ENCODE measurements at regions of chr19 and their contacts with region 1.

Region 1: GRCh38 chr19:13718733-13719132 is 45.6 kb upstream of the MRI1 start:
- DNase-seq: no peak
- H3K4me3 ChIP-seq: no peak overlapping the region
- H3K27ac ChIP-seq: no peak overlapping the region
- H3K4me1 ChIP-seq: no peaks in the 10 kb centered on the region
- H3K27me3 ChIP-seq: no peaks in the 10 kb centered on the region
- CTCF ChIP-seq: peak in 1 of 4 experiments; percentile 12
- POLR2A ChIP-seq: no peak

Region 2: DNA sequence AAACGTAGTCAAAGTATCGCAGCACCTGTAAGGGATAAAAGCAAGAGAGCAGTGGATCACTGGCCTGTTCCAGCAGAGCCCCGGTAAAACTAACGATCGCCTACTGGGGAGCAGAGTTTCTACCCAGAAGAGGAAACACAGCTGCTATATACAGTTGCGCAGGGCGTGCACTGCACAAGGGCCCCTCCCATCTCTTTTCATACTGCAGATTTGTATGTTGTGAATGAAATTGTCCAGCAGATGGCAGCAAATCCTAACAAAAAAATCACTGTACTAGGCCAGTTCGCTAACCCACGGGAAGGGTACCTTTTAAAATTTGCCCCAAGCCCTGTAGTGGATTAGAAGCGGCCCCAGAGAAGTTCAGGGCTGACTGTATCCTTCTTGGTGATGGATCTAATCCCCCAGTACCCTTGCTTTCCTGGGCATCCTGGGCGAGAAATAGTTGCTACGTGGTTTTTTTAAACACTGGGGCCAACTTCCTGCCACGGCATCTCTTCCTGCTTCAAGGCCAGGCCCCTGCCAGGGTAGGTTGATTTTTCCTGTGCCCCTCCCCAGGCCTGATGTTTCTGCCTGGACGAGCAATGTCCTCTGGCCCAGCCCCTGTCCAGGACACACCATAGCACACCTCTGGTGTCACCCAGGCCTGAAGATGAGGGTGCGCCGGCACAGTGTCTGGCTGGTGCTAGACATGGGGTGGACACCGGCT is 441.5 kb before region 1 on chr19:
- intact Hi-C with region 1: loop called (anchors 5 kb)
- DNase-seq: peak; percentile 49
- H3K4me3 ChIP-seq: no peak overlapping the region
- H3K27ac ChIP-seq: no peak overlapping the region
- H3K4me1 ChIP-seq: no peaks in the 10 kb centered on the region
- H3K27me3 ChIP-seq: no peaks in the 10 kb centered on the region
- CTCF ChIP-seq: peak; percentile 42 to 79 (median 74)
- POLR2A ChIP-seq: no peak

Region 3: GRCh38 chr19:13511947-13512346 is 206.8 kb before region 1 on chr19:
- intact Hi-C with region 1: no loop called
- DNase-seq: no peak
- H3K4me3 ChIP-seq: no peak overlapping the region
- H3K27ac ChIP-seq: no peak overlapping the region
- H3K4me1 ChIP-seq: no peaks in the 10 kb centered on the region
- H3K27me3 ChIP-seq: peaks cover 10% of the 10 kb centered on the region
- CTCF ChIP-seq: no peak
- POLR2A ChIP-seq: no peak

Region 4: DNA sequence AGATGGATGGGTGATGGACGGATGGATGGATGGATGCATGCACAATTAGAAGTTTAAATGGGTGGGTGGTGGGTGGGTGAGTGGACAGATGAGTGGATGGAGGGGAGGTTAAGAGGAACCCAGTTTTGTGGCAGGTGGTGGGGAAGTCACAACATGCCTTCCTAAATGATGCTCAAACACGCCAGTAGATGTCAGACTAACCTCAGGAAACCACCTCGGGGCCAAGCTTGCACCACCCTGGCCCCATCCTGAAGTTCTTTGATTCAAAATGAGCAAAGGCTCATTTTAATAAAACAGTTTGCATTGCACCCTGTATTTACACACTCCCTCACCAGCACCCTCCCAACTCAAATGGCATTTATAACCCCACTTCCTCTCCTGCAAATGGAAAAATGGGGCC is 121.1 kb before region 1 on chr19:
- intact Hi-C with region 1: loop called (anchors 2 kb)
- DNase-seq: peak; percentile 23
- H3K4me3 ChIP-seq: no peak overlapping the region
- H3K27ac ChIP-seq: no peak overlapping the region
- H3K4me1 ChIP-seq: no peaks in the 10 kb centered on the region
- H3K27me3 ChIP-seq: no peaks in the 10 kb centered on the region
- CTCF ChIP-seq: peak in 3 of 4 experiments; percentile 47 to 68 (median 64)
- POLR2A ChIP-seq: no peak

Region 5: GRCh38 chr19:13633109-13633508 is 85.6 kb before region 1 on chr19:
- intact Hi-C with region 1: no loop called
- DNase-seq: no peak
- H3K4me3 ChIP-seq: no peak overlapping the region
- H3K27ac ChIP-seq: no peak overlapping the region
- H3K4me1 ChIP-seq: no peaks in the 10 kb centered on the region
- H3K27me3 ChIP-seq: no peaks in the 10 kb centered on the region
- CTCF ChIP-seq: no peak
- POLR2A ChIP-seq: no peak